ENCODE measurements at regions of chr2 and their contacts with region 1.

Region 1: GRCh38 chr2:17976871-17977746 is 98.6 kb downstream of the KCNS3 start:
- DNase-seq: peak; percentile 81
- H3K4me3 Mint-ChIP-seq: no peak overlapping the region
- H3K27ac Mint-ChIP-seq: peak overlapping the region; percentile 67
- H3K4me1 Mint-ChIP-seq: peaks cover 12% of the 10 kb centered on the region
- H3K27me3 Mint-ChIP-seq: no peaks in the 10 kb centered on the region
- CTCF ChIP-seq: no peak

Region 2: DNA sequence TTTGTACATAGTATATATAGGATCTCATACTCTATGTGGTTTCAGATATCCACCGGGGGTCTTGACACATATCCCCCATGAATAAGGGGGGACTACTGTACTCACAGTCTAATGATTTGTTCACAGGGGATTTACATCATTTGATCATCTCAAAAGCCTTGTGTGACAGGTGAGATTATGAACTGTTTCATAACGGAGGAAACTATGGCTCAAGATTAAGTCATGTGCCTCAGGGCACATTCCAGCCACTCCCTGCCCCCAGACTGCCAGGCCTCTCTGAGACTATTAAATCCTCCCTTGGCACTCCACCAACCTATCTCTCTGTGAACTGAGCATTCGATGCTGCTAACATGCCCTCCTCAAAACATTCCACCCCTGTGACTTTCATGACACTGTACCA is 70.7 kb after region 1 on chr2:
- CTCF ChIA-PET with region 1: no interaction called
- POLR2A ChIA-PET with region 1: no interaction called
- intact Hi-C with region 1: loop called (anchors 5 kb)
- DNase-seq: peak; percentile 93
- H3K4me3 Mint-ChIP-seq: peak overlapping the region; percentile 10
- H3K27ac Mint-ChIP-seq: peak overlapping the region; percentile 1
- H3K4me1 Mint-ChIP-seq: peaks cover 32% of the 10 kb centered on the region
- H3K27me3 Mint-ChIP-seq: no peaks in the 10 kb centered on the region
- CTCF ChIP-seq: no peak